ENCODE measurements at regions of chr19 and their contacts with region 1.

Region 1: GRCh38 chr19:2750808-2751443 is 11.1 kb upstream of the SLC39A3 start:
- DNase-seq: no peak
- H3K4me3 ChIP-seq: no peak overlapping the region
- H3K4me3 Mint-ChIP-seq: no peak overlapping the region
- H3K27ac ChIP-seq: no peak overlapping the region
- H3K27ac Mint-ChIP-seq: no peak overlapping the region
- H3K4me1 ChIP-seq: peaks cover 4% of the 10 kb centered on the region
- H3K4me1 Mint-ChIP-seq: no peaks in the 10 kb centered on the region
- H3K27me3 ChIP-seq: no peaks in the 10 kb centered on the region
- H3K27me3 Mint-ChIP-seq: no peaks in the 10 kb centered on the region

Region 2: DNA sequence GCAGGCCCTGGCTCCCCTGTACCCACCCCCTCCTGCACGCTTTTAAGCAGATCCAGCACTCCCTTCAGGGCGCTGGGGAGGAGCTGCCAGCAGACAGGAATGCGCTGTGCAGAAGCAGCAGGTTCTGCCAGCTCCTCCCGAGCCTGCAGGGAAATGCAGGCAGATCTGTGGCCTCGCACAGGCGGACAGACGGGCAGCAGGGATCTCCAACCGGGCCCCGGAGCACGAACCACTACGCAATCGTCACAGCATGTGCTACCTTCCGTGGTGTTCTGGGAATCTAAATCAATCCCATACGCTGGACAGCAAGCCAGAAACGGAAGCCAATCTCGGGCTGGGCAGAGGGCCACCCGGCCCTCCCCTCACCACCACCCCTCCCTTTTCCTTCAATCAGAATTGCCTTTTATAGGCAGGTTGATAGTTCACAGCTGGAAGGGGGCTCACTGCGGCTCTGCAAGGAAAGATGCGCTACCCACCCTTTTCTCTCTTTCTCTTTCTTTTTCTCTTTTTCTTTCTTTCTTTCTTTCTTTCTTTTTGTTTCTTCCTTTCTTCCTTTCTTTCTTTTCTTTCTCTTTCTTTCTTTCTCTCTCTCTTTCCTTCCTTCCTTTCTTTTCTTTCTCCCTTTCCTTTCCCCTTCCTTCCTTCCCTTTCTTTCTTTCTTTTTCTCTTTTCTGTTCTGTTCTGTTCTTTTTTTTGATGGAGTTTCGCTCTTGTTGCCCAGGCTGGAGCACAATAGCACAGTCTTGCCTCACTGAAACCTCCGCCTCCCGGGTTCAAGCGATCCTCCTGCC is 148.3 kb before region 1 on chr19:
- CTCF ChIA-PET with region 1: no interaction called
- POLR2A ChIA-PET with region 1: no interaction called
- intact Hi-C with region 1: no loop called
- DNase-seq: no peak
- H3K4me3 ChIP-seq: no peak overlapping the region
- H3K4me3 Mint-ChIP-seq: no peak overlapping the region
- H3K27ac ChIP-seq: no peak overlapping the region
- H3K27ac Mint-ChIP-seq: peak overlapping the region in 2 of 7 donors; percentile 24 to 68
- H3K4me1 ChIP-seq: peaks cover 13% of the 10 kb centered on the region
- H3K4me1 Mint-ChIP-seq: peaks cover 7 to 18% (median 12%) of the 10 kb centered on the region in 4 donors
- H3K27me3 ChIP-seq: no peaks in the 10 kb centered on the region
- H3K27me3 Mint-ChIP-seq: no peaks in the 10 kb centered on the region

Region 3: DNA sequence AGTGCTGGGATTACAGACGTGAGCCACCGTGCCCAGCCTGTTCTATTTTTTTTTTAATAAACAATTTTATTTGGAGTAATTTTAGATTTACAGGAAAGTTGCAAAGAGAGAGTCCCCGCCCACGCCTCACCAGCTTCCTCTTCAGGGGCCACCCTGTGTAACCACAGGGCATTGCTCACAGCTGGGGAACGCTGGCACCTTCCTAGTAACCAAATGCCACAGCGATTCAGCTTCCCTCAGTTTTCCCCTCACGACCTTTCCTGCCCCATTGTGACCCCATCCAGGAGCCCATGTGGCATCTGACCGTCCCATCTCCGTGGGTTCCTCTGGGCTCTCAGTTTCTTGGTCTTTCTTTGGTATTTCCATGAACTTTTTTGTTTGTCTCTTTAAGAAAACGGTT is 132.3 kb before region 1 on chr19:
- CTCF ChIA-PET with region 1: no interaction called
- POLR2A ChIA-PET with region 1: no interaction called
- intact Hi-C with region 1: no loop called
- DNase-seq: peak; percentile 51 to 84 (median 59)
- H3K4me3 ChIP-seq: peak overlapping the region; percentile 8 to 29
- H3K4me3 Mint-ChIP-seq: peak overlapping the region; percentile 66 to 90 (median 80)
- H3K27ac ChIP-seq: peak overlapping the region; percentile 57
- H3K27ac Mint-ChIP-seq: peak overlapping the region; percentile 89 to 96 (median 93)
- H3K4me1 ChIP-seq: peaks cover 70% of the 10 kb centered on the region
- H3K4me1 Mint-ChIP-seq: peaks cover 40 to 69% (median 54%) of the 10 kb centered on the region in 4 donors
- H3K27me3 ChIP-seq: no peaks in the 10 kb centered on the region
- H3K27me3 Mint-ChIP-seq: no peaks in the 10 kb centered on the region

Region 4: DNA sequence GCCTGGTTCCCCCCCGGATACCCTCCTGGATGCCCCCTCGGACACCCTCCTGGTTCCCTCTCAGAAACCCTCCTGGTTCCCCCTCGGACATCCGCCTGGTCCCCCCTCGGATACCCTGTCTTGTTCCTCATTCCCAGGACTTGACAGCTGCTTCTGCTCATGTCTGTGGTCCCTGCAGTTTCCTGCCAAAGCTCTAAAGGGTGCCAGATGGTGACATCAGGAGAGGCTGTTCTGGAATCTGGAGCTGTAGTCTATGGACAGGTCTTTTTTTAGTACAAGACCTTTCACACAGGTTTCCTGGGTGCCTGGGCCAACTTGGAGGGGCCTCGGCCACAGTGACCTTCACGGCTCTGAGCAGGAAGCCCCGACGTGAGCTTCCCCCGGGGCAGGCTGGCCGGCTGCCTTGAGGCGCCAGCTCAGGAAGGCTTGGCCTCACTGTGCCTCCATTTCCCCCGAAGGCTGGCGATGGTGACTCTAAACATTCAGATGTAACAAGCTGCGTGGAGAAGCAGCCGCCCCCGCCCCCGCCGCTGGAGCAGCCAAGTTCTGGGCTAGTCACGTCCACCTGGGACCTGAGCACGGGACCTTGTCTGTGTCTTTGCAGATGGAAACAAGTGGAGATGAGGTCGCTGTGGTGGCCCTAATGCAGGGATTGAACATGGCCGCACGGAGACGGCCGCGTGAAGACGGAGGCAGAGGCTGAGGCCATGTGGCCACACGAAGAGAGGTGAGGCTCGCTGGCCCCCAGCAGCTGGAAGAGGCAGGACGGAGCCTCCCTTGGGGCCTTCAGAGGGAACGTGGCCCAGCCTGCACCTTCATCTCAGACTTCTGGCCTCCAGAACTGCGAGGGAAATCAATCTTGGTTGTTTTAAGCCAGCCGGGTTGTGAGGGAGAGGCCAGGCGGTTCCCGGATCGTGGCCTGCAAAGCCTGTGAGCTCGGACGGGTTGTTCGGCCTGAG is 19.4 kb after region 1 on chr19:
- CTCF ChIA-PET with region 1: interaction called, 11 read pairs
- POLR2A ChIA-PET with region 1: no interaction called
- intact Hi-C with region 1: no loop called
- DNase-seq: no peak
- H3K4me3 ChIP-seq: no peak overlapping the region
- H3K4me3 Mint-ChIP-seq: no peak overlapping the region
- H3K27ac ChIP-seq: no peak overlapping the region
- H3K27ac Mint-ChIP-seq: peak overlapping the region in 2 of 7 donors; percentile 52 to 53
- H3K4me1 ChIP-seq: peaks cover 11% of the 10 kb centered on the region
- H3K4me1 Mint-ChIP-seq: peaks cover 7 to 27% (median 16%) of the 10 kb centered on the region in 4 donors
- H3K27me3 ChIP-seq: no peaks in the 10 kb centered on the region
- H3K27me3 Mint-ChIP-seq: no peaks in the 10 kb centered on the region